ENCODE measurements at regions of chr1 and their contacts with region 1.

Region 1: DNA sequence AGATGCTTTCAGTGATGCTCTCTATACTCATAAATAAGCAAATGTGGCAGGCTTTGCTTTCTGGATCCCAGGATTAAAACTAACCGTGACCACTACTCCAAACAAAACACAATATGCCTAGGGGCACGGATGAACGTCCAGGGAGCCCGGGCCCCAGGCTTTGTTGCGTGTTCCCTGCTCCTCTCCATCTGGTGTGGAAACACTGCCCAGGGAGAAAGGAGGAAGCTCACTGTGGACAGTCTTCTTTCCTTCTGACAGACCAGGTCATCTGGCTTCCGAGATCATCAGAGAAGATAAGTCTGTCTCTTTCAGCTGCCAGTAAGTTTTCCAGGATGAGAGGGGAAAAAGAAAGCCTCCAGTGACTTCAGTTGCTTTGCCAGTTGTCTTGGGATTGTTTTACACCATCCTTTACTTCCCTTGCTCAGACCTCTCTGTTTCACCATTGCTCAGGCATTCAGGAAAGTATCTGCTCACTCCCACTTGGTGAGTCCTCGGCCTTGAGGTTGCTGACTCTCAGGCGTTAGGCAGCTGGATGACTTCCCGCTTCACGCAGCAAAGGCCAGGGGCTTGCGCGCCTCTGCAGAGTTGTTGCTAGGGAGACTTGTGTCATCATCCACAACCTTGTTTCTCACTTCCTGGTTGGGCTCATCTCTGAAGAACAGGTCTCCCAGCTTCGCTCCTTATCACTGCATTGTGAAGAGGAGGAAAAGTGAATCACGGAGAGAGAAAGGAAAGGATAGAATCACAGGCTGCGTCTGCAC is 20.6 kb upstream of the PGD start:
- DNase-seq: peak; percentile 80
- ATAC-seq: peak; percentile 38
- H3K4me3 ChIP-seq: no peak overlapping the region
- H3K27ac ChIP-seq: peak overlapping the region; percentile 60
- H3K4me1 ChIP-seq: peaks cover 35% of the 10 kb centered on the region
- H3K27me3 ChIP-seq: no peaks in the 10 kb centered on the region
- CTCF ChIP-seq: no peak

Region 2: DNA sequence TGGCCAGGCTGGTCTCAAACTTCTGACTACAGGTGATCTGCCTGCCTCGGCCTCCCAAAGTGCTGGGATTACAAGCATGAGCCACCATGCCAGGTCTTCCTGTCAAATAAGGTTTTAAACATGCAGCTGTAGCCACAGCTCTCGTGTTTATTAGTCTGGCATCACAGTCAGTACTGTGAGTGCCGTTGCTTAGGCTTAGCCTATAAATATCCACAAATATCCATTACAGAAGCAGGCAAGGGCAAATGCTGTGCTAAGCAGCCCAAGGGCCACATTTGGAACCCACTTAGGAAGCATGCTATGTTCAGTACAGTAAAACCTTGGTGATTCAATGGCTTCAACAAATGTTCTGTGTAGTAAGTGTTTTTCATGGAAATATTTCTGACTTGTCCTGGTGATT is 92.0 kb before region 1 on chr1:
- CTCF ChIA-PET with region 1: no interaction called
- POLR2A ChIA-PET with region 1: no interaction called
- intact Hi-C with region 1: no loop called
- DNase-seq: no peak
- ATAC-seq: no peak
- H3K4me3 ChIP-seq: no peak overlapping the region
- H3K27ac ChIP-seq: no peak overlapping the region
- H3K4me1 ChIP-seq: no peaks in the 10 kb centered on the region
- H3K27me3 ChIP-seq: no peaks in the 10 kb centered on the region
- CTCF ChIP-seq: no peak

Region 3: DNA sequence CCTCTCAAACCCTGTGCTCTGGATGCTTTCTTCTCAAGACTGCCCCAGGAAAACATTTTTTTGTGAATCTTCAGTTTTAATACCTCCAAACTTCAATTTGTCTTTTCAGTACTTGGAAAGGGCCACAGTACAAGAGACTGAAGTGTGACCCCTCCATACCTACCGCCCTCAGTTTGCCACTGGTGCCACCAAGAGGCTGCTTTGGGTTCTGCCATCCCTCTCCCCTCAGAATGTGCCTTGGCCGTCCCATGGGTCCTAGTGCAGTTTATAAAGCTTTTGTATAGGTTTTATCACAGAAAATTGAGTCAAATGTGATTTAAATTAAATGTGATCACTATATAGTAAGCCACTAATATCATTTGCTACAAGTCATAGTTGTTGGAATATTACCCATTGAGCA is 40.2 kb before region 1 on chr1:
- CTCF ChIA-PET with region 1: no interaction called
- POLR2A ChIA-PET with region 1: no interaction called
- intact Hi-C with region 1: no loop called
- DNase-seq: peak; percentile 40
- ATAC-seq: peak; percentile 96
- H3K4me3 ChIP-seq: no peak overlapping the region
- H3K27ac ChIP-seq: no peak overlapping the region
- H3K4me1 ChIP-seq: 0 out of 2 replicates have a peak, but pooled peaks cover 3% of the 10 kb centered on the region
- H3K27me3 ChIP-seq: no peaks in the 10 kb centered on the region
- CTCF ChIP-seq: peak; percentile 86

Region 4: DNA sequence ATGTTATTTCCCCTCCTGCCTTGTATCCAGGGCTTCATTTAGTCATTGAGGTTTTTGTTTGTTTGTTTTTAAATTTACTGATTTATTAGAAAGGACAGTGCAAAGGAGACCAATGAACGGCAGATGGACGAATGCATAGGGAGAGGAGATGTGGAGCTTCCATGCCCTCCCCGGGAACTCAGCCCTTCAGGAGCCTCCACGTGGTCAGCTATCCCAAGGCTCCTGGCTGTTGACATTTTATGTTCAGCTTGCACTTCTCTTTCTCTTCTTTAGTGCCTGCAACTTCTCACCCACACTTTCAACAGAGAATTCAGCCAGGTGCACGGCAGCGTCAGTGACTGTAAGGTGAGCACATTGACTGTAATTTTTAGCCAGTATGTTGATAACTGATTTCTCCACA is 10.1 kb before region 1 on chr1:
- CTCF ChIA-PET with region 1: no interaction called
- POLR2A ChIA-PET with region 1: no interaction called
- intact Hi-C with region 1: no loop called
- DNase-seq: no peak
- ATAC-seq: no peak
- H3K4me3 ChIP-seq: no peak overlapping the region
- H3K27ac ChIP-seq: no peak overlapping the region
- H3K4me1 ChIP-seq: no peaks in the 10 kb centered on the region
- H3K27me3 ChIP-seq: no peaks in the 10 kb centered on the region
- CTCF ChIP-seq: no peak

Region 5: GRCh38 chr1:10398734-10399623 is 20.7 kb after region 1 on chr1 and contains the start of gene PGD:
- CTCF ChIA-PET with region 1: no interaction called
- POLR2A ChIA-PET with region 1: interaction called, 6 read pairs
- intact Hi-C with region 1: loop called (anchors 1 kb)
- DNase-seq: peak; percentile 98
- ATAC-seq: peak; percentile 92
- H3K4me3 ChIP-seq: peak within 1 kb of the TSS; percentile 95
- H3K27ac ChIP-seq: peak within 1 kb of the TSS; percentile 97
- H3K4me1 ChIP-seq: peaks cover 21% of the 10 kb centered on the region
- H3K27me3 ChIP-seq: no peaks in the 10 kb centered on the region
- CTCF ChIP-seq: no peak
- total RNA-seq, gene PGD: 150 and 162 TPM in 2 replicates

Region 6: GRCh38 chr1:10415211-10415930 is 37.1 kb after region 1 on chr1:
- CTCF ChIA-PET with region 1: no interaction called
- POLR2A ChIA-PET with region 1: no interaction called
- intact Hi-C with region 1: no loop called
- DNase-seq: peak; percentile 47
- ATAC-seq: peak; percentile 18; the same call in 1 of the 2 replicates
- H3K4me3 ChIP-seq: no peak overlapping the region
- H3K27ac ChIP-seq: peak overlapping the region; percentile 52
- H3K4me1 ChIP-seq: peaks cover 6% of the 10 kb centered on the region; the same call in 1 of the 2 replicates
- H3K27me3 ChIP-seq: no peaks in the 10 kb centered on the region
- CTCF ChIP-seq: no peak

Region 7: GRCh38 chr1:10494754-10495474 is 116.7 kb after region 1 on chr1:
- CTCF ChIA-PET with region 1: interaction called, 3 read pairs
- POLR2A ChIA-PET with region 1: no interaction called
- intact Hi-C with region 1: loop called (anchors 1 kb)
- DNase-seq: peak; percentile 75
- ATAC-seq: peak; percentile 96
- H3K4me3 ChIP-seq: no peak overlapping the region
- H3K27ac ChIP-seq: no peak overlapping the region
- H3K4me1 ChIP-seq: peaks cover 4% of the 10 kb centered on the region; the same call in 1 of the 2 replicates
- H3K27me3 ChIP-seq: no peaks in the 10 kb centered on the region
- CTCF ChIP-seq: peak; percentile 94

Measured in PC-3 (cell line).